Esophagus squamous epithelium (tissue), 5 donors: ENCODE measurements at regions of chr10 and their contacts with region 1.

Region 1: DNA sequence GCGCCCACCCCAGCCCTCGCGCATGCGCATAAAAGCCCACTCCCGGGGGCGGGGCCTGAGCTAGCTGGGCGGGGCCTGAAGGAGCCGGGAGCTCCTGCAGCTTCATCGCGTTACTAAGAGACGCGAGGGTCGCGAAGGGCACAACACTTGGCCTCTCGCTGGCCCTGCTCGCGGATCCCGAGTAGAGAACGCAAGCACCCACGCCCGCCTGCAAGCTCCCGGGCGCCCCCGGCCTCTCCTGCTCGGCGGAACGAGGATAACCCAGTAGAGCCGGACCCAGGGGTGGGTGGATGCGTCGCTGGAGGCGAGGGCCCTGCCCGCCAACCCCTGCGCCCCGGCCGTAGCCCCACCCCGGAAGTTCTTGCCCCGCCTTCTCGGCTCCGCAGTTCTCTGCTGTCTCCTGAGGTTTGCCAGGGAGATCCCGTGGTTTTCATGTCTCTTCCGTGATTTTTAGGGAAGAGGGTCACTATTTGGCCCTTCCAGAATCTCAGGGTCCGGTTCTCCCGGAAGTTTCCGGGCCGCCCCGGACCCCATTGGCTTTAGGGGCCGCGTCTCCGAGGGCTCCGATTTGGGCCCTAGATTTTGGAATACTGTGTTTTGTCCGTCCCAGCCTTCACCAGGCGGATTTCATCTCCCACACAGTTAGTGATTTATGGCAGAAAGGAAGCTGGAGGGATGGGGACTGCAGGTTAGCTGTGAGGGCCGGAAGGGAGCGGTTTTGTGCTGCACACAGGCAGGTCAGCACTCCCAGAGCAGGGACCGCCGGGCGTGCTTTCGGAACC is at the start of gene MEIG1:
- DNase-seq: peak; percentile 63
- H3K4me3 ChIP-seq: peak within 1 kb of the TSS; percentile 52 to 92 (median 63)
- H3K27ac ChIP-seq: peak within 1 kb of the TSS; percentile 92 to 98 (median 96)
- H3K4me1 ChIP-seq: peaks cover 10 to 24% (median 11%) of the 10 kb centered on the region in 3 donors
- H3K27me3 ChIP-seq: no peaks in the 10 kb centered on the region
- CTCF ChIP-seq: no peak
- POLR2A ChIP-seq: peak in 2 of 4 donors; percentile 16 to 48
- total RNA-seq, gene MEIG1: 0.79 TPM in 1 of 4 donors, not detected in the others

Region 2: DNA sequence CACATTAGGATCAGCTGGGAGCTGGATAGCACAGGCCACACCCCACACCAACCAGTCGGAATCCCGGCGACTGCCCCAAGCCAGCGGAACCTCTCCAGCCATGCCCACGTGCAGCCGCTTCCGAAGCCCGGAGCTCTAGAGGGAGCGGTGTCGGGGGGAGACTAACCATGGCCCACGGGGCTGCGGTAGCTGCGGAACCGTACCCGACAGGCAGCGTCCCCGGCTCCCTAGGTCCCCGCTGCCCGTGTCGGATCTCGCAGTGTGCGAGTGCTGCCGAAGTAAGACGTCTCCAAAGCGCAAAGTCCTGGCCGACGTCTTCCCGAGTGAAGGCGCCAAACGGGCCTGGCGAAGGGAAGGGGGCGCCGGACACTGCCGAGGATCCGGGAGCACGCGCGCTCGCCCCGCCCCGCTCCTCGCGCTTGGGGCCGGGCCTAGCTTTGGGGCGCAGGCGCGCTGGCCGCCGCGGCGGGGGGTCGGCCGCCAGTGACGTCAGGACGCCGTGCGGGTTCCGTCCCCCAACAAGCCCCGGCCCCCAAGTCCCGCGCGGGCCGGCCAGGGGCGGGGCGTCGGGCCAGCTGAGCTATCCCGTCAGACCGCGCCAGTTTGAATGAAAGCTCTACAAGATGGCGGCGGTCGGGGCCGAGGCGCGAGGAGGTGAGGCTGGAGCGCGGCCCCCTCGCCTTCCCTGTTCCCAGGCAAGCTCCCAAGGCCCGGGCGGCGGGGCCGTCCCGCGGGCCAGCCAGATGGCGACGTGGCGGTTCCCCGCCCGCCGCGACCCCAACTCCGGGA is 81.0 kb before region 1 on chr10 and contains the start of gene SUV39H2:
- intact Hi-C with region 1: loop called (anchors 10 kb)
- DNase-seq: peak; percentile 56
- H3K4me3 ChIP-seq: peak within 1 kb of the TSS; percentile 70 to 97 (median 95)
- H3K27ac ChIP-seq: peak within 1 kb of the TSS; percentile 94 to 98 (median 98)
- H3K4me1 ChIP-seq: peaks cover 0 to 31% (median 15%) of the 10 kb centered on the region in 3 donors
- H3K27me3 ChIP-seq: no peaks in the 10 kb centered on the region
- CTCF ChIP-seq: peak in 1 of 6 experiments; percentile 12
- POLR2A ChIP-seq: peak in 2 of 4 donors; percentile 59 to 81
- total RNA-seq, gene SUV39H2: 5.6 to 13.2 (median 8.9) TPM

Region 3: DNA sequence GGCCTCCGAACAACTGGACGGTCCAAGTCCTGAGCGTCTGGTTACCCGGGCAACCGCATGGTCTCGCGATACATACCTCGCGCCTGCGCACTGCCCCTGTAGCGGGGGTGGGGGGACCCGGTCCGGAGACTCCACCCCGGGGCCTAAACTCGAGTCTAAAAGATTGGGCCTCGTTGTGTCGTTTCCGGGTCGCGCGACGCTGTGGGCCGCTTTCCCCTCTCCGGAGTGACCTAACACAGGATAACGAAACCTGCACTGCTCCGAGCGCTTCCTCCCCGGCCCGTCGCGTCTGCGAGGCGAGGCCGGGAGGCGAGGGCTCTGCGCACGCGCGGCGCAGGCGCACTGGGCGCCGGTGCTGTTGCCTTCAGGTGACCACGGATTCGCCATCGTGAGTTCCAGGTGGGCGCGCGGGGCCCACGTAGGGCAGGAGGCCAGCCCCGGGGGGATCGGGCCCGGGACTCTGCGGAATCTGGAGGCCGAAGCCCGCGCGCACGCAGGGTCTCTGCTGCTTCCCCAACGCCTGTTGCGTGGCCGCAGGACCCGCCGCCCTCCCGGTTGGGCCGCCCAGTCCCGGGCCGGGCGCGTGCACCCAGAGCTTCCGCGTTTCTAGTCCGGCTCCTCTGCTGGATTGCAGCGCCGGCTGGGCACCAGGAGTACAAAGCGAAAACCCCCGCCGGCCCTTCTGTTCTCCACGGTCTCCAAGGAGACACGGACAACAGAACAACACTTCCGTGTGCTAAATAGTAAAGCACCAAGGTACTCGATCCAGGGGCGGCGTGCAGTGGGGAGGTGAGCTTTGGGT is 137.7 kb after region 1 on chr10 and contains the start of gene RPP38:
- intact Hi-C with region 1: loop called (anchors 10 kb)
- DNase-seq: peak; percentile 85
- H3K4me3 ChIP-seq: peak within 1 kb of the TSS; percentile 64 to 99 (median 78)
- H3K27ac ChIP-seq: peak within 1 kb of the TSS; percentile 93 to 98 (median 95)
- H3K4me1 ChIP-seq: peaks cover 16 to 33% (median 21%) of the 10 kb centered on the region in 3 donors
- H3K27me3 ChIP-seq: no peaks in the 10 kb centered on the region
- CTCF ChIP-seq: peak in 1 of 6 experiments; percentile 5
- POLR2A ChIP-seq: peak in 2 of 4 donors; percentile 44 to 73
- total RNA-seq, gene RPP38: 10.8 to 21.0 (median 14.8) TPM

Region 4: GRCh38 chr10:15595260-15595659 is 635.8 kb after region 1 on chr10:
- intact Hi-C with region 1: no loop called
- DNase-seq: no peak
- H3K4me3 ChIP-seq: no peak overlapping the region
- H3K27ac ChIP-seq: no peak overlapping the region
- H3K4me1 ChIP-seq: no peaks in the 10 kb centered on the region
- H3K27me3 ChIP-seq: no peaks in the 10 kb centered on the region
- CTCF ChIP-seq: no peak
- POLR2A ChIP-seq: no peak